T-cell (primary cell): ENCODE measurements at regions of chr6 and their contacts with region 1.

Region 1: DNA sequence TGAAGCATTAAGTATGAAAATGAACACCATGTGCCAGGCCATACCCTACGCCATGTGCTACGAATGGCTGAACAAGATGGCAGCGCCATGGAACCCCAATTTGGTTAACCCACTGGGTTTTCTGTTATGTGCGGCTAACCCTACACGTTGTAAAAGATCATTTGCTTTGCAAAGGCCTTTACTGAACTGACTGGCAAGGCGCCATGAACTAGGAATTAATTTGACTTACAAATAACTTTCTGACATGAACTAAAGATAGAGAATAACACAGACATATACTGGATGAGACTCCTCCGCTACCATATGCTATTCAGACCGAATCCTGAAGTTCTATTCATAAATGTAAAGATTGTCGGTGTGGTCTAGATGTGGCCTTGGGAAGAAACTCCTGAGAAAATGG is 3.9 kb downstream of the CNKSR3 start:
- DNase-seq: no peak
- ATAC-seq: no peak
- H3K4me3 ChIP-seq: no peak overlapping the region
- H3K4me3 Mint-ChIP-seq: no peak overlapping the region
- H3K27ac ChIP-seq: no peak overlapping the region
- H3K27ac Mint-ChIP-seq: no peak overlapping the region
- H3K4me1 ChIP-seq: peaks cover 0 to 10% of the 10 kb centered on the region in 2 experiments
- H3K4me1 Mint-ChIP-seq: peaks cover 8 to 14% (median 13%) of the 10 kb centered on the region in 3 donors
- H3K27me3 ChIP-seq: peaks cover 0 to 24% of the 10 kb centered on the region in 2 experiments
- H3K27me3 Mint-ChIP-seq: peaks cover 37 to 39% of the 10 kb centered on the region in 2 donors

Region 2: GRCh38 chr6:154721460-154721859 is 214.9 kb after region 1 on chr6:
- CTCF ChIA-PET with region 1: interaction called in 1 of 2 experiments, 10 read pairs
- POLR2A ChIA-PET with region 1: no interaction called
- DNase-seq: no peak
- ATAC-seq: no peak
- H3K4me3 ChIP-seq: no peak overlapping the region
- H3K4me3 Mint-ChIP-seq: no peak overlapping the region
- H3K27ac ChIP-seq: no peak overlapping the region
- H3K27ac Mint-ChIP-seq: no peak overlapping the region
- H3K4me1 ChIP-seq: no peaks in the 10 kb centered on the region
- H3K4me1 Mint-ChIP-seq: no peaks in the 10 kb centered on the region
- H3K27me3 ChIP-seq: peaks cover 0 to 12% of the 10 kb centered on the region in 2 experiments
- H3K27me3 Mint-ChIP-seq: peaks cover 7 to 10% of the 10 kb centered on the region in 2 donors